ENCODE measurements at regions of chr21 and their contacts with region 1.

Region 1: DNA sequence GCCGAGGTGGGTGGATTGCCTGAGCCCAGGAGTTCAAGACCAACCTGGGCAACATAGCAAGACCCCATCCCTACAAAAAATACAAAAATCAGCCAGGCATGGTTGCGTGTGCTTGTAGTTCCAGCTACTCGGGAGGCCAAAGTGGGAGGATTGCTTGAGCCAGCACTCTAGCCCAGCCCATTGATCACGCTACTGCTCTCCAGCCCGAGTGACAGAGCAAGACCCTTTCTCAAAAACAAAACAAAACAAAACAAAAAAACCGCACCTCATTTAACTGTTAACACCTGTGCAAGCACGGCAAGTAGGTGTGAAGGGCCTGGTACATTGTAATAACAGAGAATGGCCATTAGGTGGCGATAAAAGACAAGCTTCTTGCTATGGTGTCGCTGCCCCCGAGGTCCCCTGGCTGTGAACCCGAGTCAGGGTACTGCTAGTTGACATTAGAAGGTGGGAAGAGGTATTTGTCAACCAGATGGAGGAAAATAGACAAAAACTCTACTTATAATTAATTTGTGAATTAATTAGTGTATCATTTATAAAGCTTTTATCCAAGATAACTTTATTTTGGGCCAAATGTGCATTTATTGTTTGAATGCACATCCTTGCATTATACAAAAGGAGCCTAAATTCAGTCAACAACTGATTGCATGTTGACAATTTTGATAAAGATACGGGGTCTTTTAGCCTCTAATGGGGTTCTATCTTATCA is 66.5 kb downstream of the SH3BGR start:
- DNase-seq: peak; percentile 32
- H3K4me3 ChIP-seq: no peak overlapping the region
- H3K27ac ChIP-seq: no peak overlapping the region
- H3K4me1 ChIP-seq: no peaks in the 10 kb centered on the region
- H3K27me3 ChIP-seq: no peaks in the 10 kb centered on the region
- CTCF ChIP-seq: peak; percentile 78 to 79

Region 2: DNA sequence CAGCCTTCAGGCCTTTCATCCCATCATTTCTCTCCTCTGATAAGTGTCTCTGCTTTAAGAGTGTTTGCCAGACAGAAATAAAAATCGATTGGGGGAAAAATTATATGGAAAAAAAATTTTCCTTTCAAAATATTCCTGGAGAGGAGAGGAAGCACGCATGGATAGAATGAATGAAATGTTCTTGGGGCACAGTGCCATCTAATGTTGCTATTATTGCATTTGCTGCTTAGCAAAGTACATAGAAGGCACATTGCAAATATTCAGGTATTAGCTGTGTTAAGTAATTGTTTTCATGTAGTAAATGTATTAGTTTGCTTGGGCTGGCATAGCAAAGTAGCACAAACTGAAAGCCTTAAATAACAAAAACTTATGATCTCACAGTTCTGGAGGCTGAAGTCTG is 112.5 kb after region 1 on chr21:
- CTCF ChIA-PET with region 1: no interaction called
- dilution Hi-C with region 1: no loop called
- in situ Hi-C with region 1: no loop called
- intact Hi-C with region 1: loop called (anchors 2 kb)
- DNase-seq: no peak
- H3K4me3 ChIP-seq: no peak overlapping the region
- H3K27ac ChIP-seq: no peak overlapping the region
- H3K4me1 ChIP-seq: no peaks in the 10 kb centered on the region
- H3K27me3 ChIP-seq: no peaks in the 10 kb centered on the region
- CTCF ChIP-seq: no peak

Region 3: DNA sequence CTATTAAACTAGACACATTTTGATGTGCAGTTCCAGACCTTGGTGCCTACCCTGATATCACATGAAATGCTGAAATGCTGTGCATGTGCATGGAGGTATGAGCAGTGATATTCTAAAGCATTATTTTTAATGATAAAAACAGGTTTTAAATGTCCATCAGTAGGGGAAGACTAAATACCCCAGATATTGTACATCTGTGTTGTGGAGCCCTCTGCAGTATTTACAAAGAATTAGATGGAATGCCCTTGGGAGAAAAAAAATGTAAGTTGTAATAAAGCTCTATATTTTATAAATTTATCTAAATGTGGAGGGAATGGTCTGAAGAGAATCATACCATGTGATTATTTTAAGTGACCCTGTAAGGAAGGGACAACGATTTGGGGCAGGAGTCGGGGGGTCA is 187.6 kb after region 1 on chr21:
- CTCF ChIA-PET with region 1: interaction called, 25 read pairs
- dilution Hi-C with region 1: no loop called
- in situ Hi-C with region 1: loop called (anchors 10 to 25 kb)
- intact Hi-C with region 1: no loop called
- DNase-seq: no peak
- H3K4me3 ChIP-seq: no peak overlapping the region
- H3K27ac ChIP-seq: no peak overlapping the region
- H3K4me1 ChIP-seq: no peaks in the 10 kb centered on the region
- H3K27me3 ChIP-seq: no peaks in the 10 kb centered on the region
- CTCF ChIP-seq: no peak

Region 4: DNA sequence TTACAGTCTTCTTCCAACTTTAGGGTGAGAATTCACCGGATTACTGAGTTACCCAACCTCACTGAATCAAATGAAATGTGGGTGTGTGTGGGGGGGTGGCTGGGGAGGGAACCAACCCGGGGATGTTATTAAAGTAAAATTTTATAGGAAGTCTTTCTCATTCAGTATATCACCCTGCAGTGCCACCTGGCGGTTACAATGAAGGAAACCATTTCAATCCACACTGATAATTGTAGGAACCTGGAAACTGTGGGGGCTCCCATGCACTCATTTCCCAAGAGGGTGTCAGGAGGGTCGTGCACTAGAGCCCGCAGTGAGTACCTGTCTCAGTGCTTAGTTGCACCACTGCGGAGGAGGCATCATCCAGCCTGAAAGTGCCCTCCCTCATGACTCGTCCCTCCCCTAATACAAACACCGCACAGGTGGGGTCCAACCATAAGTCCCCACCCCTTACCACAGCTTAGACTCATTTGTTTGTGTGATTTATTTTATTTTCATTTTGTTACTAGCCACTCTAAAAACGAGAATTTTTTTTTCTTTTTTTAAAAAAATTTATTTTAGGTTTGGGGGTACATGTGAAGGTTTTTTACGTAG is 197.6 kb after region 1 on chr21:
- CTCF ChIA-PET with region 1: no interaction called
- dilution Hi-C with region 1: no loop called
- in situ Hi-C with region 1: loop called (anchors 10 to 25 kb)
- intact Hi-C with region 1: loop called (anchors 1 kb)
- DNase-seq: peak; percentile 16
- H3K4me3 ChIP-seq: no peak overlapping the region
- H3K27ac ChIP-seq: no peak overlapping the region
- H3K4me1 ChIP-seq: no peaks in the 10 kb centered on the region
- H3K27me3 ChIP-seq: no peaks in the 10 kb centered on the region
- CTCF ChIP-seq: peak; percentile 30 to 62

Measured in mammary epithelial cell (primary cell).